Activated CD8-positive, alpha-beta memory T cell treated with anti-CD3 and anti-CD28 coated beads, Interleukin-2, amount 10 ng/mL, durations not matched to agents 7 days and 5 days (primary cell): ENCODE measurements at regions of chr1 and their contacts with region 1.

Region 1: DNA sequence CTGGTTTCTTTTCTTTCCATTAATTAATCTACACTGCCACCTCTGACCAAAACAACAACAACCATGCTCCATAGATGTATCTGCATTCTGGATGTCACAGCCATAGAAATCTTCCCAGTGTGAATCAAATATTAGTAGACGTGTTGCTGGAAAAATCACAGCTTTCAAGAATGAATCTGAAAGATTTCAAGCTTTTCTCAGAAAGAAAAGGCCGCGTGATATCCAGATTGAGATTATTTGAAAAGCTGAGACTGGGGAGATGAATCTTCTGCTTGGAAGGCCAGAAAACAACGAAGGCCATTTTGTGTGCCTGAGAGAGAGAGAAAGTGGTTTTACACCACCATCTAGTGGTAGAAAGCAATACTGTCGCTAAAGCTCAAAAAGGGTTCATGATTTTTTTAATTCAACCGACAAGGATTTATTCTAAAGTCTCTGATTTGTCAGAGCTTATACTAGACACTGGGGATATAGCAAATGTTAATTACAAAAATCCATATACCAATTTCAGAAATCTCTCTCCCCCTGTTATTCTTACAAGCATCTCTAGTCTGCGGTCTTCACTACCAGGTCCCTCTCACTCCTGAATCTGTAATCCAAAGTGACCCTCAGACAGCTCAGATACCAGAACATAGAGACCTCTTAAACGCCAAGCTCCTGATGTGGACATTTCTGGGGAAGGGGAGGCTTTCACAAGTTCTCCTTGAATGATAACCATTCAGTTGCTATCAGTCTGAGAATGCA is 87.5 kb upstream of the SGIP1 start:
- DNase-seq: peak; percentile 53
- ATAC-seq: peak; percentile 67
- H3K4me3 Mint-ChIP-seq: peak overlapping the region; percentile 85
- H3K27ac Mint-ChIP-seq: peak overlapping the region; percentile 98
- H3K4me1 Mint-ChIP-seq: peaks cover 33% of the 10 kb centered on the region
- H3K27me3 Mint-ChIP-seq: peaks cover 21% of the 10 kb centered on the region

Region 2: GRCh38 chr1:66276218-66276617 is 170.2 kb before region 1 on chr1:
- CTCF ChIA-PET with region 1: interaction called, 13 read pairs
- DNase-seq: peak; percentile 77
- ATAC-seq: peak; percentile 81
- H3K4me3 Mint-ChIP-seq: peak overlapping the region; percentile 52
- H3K27ac Mint-ChIP-seq: peak overlapping the region; percentile 79
- H3K4me1 Mint-ChIP-seq: peaks cover 93% of the 10 kb centered on the region
- H3K27me3 Mint-ChIP-seq: no peaks in the 10 kb centered on the region

Region 3: DNA sequence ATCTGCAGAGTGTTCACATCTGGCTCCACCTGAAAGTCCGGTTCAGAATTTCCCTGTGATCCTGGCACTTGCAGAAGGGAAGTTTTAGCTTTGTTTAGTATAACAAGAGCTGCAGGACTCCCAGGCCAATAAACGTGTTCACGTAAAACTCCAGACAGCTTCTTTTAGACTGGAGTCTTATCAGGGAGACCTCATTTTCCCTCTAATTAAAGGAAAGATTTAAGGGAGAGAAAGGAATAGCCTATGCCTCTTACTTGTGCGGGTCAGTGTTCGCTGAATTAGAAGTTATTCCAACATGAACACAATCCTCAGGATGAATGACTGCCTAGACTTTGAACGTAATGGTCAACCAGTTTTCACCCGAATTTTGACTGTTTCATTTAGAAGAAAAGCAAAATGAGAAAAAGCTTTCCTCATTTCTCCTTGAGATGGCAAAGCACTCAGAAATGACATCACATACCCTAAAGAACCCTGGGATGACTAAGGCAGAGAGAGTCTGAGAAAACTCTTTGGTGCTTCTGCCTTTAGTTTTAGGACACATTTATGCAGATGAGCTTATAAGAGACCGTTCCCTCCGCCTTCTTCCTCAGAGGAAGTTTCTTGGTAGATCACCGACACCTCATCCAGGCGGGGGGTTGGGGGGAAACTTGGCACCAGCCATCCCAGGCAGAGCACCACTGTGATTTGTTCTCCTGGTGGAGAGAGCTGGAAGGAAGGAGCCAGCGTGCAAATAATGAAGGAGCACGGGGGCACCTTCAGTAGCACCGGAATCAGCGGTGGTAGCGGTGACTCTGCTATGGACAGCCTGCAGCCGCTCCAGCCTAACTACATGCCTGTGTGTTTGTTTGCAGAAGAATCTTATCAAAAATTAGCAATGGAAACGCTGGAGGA is 114.5 kb before region 1 on chr1:
- CTCF ChIA-PET with region 1: interaction called, 13 read pairs
- DNase-seq: peak; percentile 79
- ATAC-seq: peak; percentile 34
- H3K4me3 Mint-ChIP-seq: peak overlapping the region; percentile 85
- H3K27ac Mint-ChIP-seq: peak overlapping the region; percentile 96
- H3K4me1 Mint-ChIP-seq: peaks cover 53% of the 10 kb centered on the region
- H3K27me3 Mint-ChIP-seq: no peaks in the 10 kb centered on the region

Region 4: GRCh38 chr1:66350001-66350547 is 96.4 kb before region 1 on chr1:
- CTCF ChIA-PET with region 1: interaction called, 42 read pairs
- DNase-seq: peak; percentile 68
- ATAC-seq: peak; percentile 61
- H3K4me3 Mint-ChIP-seq: peak overlapping the region; percentile 76
- H3K27ac Mint-ChIP-seq: peak overlapping the region; percentile 91
- H3K4me1 Mint-ChIP-seq: peaks cover 94% of the 10 kb centered on the region
- H3K27me3 Mint-ChIP-seq: no peaks in the 10 kb centered on the region

Region 5: DNA sequence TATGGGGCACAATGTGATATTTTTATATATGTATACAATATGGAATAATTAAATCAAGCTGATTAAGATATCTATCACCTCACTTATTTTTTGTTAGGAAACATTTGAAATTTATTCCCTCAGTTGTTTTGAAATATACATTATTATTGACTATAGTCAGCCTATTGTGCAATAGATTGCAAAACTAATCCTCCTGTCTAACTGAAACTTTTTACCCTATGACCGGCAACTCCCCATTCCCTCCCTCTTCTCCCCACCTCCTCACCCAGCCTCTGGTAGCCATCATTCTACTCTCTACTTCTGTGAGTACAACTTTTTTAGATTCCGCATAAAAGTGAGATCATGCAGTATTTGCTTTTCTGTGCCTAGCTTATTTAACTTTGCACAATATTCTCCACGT is 30.1 kb before region 1 on chr1:
- CTCF ChIA-PET with region 1: no interaction called
- DNase-seq: no peak
- ATAC-seq: no peak
- H3K4me3 Mint-ChIP-seq: no peak overlapping the region
- H3K27ac Mint-ChIP-seq: no peak overlapping the region
- H3K4me1 Mint-ChIP-seq: peaks cover 8% of the 10 kb centered on the region
- H3K27me3 Mint-ChIP-seq: no peaks in the 10 kb centered on the region

Region 6: DNA sequence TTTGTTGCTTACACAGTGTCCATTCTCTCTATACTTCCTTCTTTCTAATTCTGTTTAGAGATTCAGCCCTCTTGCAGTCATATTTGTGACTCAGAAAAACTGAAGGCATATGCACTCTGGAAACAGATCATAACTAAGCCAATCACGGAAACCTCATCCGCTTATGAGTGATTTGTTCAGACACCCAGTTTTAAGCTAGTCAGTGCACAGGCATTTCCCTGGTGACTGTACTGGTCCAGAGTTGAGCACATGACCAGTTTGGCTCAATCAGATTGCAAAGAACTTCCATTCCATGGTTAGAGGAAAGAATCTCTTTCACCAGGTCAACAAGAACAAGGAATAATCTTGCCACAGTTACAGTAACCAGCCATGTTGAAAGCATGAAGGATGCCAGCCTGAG is 18.4 kb after region 1 on chr1:
- CTCF ChIA-PET with region 1: no interaction called
- DNase-seq: no peak
- ATAC-seq: no peak
- H3K4me3 Mint-ChIP-seq: no peak overlapping the region
- H3K27ac Mint-ChIP-seq: no peak overlapping the region
- H3K4me1 Mint-ChIP-seq: no peaks in the 10 kb centered on the region
- H3K27me3 Mint-ChIP-seq: peaks cover 36% of the 10 kb centered on the region

Region 7: GRCh38 chr1:66725885-66726665 is 279.6 kb after region 1 on chr1:
- CTCF ChIA-PET with region 1: interaction called, 11 read pairs
- DNase-seq: peak; percentile 68
- ATAC-seq: peak; percentile 76
- H3K4me3 Mint-ChIP-seq: no peak overlapping the region
- H3K27ac Mint-ChIP-seq: no peak overlapping the region
- H3K4me1 Mint-ChIP-seq: peaks cover 15% of the 10 kb centered on the region
- H3K27me3 Mint-ChIP-seq: peaks cover 31% of the 10 kb centered on the region